ENCODE measurements at regions of chr5 and their contacts with region 1.

Region 1: DNA sequence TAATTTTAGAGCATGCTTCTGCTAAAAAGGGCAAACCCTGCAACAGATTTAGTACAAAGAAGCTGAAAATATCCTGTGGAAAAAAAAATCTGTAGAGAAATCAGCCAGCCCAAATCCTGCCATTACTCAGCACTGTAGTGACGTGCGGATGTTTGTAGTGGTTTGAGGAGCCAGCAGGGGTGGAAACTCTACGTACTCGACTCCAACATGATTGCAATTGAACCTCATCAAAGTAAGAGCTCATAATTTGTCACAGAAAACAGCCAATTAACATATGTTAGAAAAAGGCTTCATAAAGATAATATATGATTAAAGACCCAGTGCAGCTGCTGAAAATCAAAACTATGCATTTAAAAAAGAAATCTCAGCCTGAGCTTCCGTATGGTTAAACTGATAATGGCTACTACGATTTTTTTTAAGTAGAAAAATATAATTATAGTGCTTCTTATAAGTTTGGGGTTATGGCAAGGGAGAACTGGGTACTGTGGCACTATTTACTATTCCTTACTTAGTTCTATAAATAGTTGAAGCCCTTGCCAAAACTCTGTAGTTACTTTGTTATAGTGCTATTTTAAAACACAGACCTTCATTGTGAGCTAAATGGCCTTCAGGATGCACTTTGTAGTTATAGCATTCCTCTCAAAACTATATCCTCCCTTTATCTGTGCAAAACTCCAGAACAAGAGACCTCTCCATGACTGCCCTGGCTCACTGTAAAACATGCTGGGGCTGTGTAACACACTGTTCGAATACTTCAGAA is 49.4 kb downstream of the MEF2C start:
- DNase-seq: peak; percentile 47 to 66 (median 54)
- H3K4me3 ChIP-seq: no peak overlapping the region
- H3K27ac ChIP-seq: peak overlapping the region in 1 of 2 donors; percentile 41
- H3K4me1 ChIP-seq: peaks cover 13% of the 10 kb centered on the region
- H3K27me3 ChIP-seq: no peaks in the 10 kb centered on the region
- CTCF ChIP-seq: no peak
- EP300 ChIP-seq: no peak
- POLR2A ChIP-seq: no peak

Region 2: DNA sequence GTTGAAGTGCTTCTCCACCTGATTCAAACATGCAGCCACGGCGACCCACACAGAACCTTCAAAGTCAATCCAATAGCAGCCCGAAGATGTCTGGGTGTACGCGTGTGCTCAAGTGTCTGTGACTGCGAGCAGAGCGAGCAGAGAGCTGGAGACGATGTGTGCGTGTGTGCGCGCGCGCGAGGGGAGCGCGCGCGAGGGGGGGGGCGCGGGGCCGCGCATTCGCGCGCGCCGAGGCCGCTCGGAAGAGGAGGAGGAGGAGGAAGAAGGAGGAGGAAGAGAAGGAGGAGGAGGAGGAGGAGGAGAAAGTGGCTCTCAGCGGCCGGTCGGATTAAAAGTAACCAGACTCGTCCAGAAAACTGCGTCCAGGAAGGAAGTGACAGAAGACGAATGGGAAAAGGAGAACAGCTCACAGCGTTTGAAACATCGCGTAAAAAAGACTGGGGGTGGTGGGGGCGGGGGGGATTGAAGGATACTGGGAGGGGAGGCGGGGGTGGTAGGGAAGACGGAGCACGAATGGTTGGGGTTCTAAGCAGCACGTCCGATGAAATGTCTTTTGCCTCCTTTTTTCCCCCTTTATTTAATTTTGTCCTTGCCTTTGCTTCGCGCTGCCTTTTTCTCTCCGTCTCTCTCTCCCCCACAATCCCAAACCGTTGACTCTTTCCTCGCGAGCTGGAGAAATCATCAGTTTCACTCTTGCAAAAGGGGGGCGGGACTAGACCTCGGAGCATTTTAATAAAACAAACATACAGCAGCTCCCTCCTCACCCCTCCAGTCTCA is 49.7 kb after region 1 on chr5 and contains the start of gene MEF2C:
- intact Hi-C with region 1: loop called (anchors 2 to 10 kb)
- DNase-seq: peak; percentile 77 to 91 (median 82)
- H3K4me3 ChIP-seq: peak within 1 kb of the TSS; percentile 48
- H3K27ac ChIP-seq: peak within 1 kb of the TSS; percentile 82 to 87
- H3K4me1 ChIP-seq: peaks cover 3% of the 10 kb centered on the region
- H3K27me3 ChIP-seq: no peaks in the 10 kb centered on the region
- CTCF ChIP-seq: no peak
- EP300 ChIP-seq: no peak
- POLR2A ChIP-seq: peak; percentile 89
- total RNA-seq, gene MEF2C: 27.2 to 91.4 (median 77.5) TPM

Region 3: DNA sequence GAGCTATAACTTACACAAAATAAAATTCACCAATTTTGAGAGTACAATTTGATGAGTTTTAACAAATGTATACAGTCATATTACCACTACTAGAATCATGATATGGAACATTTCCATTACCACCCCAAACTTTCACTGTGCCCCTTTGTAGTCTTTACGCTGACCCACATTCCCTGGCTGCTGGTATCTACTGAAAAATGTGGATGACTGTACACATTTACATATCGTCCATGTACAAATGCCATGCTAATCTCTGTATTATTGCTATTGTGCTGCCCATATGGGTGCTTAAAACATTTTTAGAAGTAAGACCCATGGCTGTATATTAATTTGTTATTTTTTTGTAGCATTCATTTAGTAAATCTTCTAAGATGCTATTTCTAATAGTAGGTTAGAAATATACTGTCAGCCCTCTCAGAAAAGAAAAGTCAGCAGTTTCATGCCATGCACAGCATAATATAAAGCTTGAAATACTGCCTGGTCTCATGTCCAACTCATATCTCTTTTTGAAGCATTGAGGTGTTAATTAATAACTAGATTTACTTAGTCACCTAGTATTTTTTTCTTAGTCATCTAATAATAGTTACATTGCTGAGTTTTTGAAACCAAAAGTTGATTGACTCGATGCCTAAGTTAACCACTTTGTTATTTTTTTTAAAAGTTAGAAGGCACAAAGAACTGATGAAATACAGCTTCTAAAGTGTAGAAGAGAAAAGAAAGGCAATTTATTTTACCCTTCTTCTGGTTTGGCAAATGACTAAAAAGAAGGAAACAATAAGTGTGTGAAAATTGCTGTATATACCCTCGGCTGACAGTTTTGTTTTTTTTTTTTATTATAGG is 237.8 kb after region 1 on chr5:
- intact Hi-C with region 1: no loop called
- DNase-seq: no peak
- H3K4me3 ChIP-seq: no peak overlapping the region
- H3K27ac ChIP-seq: no peak overlapping the region
- H3K4me1 ChIP-seq: no peaks in the 10 kb centered on the region
- H3K27me3 ChIP-seq: no peaks in the 10 kb centered on the region
- CTCF ChIP-seq: no peak
- EP300 ChIP-seq: no peak
- POLR2A ChIP-seq: no peak

Measured in ovary (tissue), 10 donors.